ENCODE measurements at regions of chr12 and their contacts with region 1.

Region 1: DNA sequence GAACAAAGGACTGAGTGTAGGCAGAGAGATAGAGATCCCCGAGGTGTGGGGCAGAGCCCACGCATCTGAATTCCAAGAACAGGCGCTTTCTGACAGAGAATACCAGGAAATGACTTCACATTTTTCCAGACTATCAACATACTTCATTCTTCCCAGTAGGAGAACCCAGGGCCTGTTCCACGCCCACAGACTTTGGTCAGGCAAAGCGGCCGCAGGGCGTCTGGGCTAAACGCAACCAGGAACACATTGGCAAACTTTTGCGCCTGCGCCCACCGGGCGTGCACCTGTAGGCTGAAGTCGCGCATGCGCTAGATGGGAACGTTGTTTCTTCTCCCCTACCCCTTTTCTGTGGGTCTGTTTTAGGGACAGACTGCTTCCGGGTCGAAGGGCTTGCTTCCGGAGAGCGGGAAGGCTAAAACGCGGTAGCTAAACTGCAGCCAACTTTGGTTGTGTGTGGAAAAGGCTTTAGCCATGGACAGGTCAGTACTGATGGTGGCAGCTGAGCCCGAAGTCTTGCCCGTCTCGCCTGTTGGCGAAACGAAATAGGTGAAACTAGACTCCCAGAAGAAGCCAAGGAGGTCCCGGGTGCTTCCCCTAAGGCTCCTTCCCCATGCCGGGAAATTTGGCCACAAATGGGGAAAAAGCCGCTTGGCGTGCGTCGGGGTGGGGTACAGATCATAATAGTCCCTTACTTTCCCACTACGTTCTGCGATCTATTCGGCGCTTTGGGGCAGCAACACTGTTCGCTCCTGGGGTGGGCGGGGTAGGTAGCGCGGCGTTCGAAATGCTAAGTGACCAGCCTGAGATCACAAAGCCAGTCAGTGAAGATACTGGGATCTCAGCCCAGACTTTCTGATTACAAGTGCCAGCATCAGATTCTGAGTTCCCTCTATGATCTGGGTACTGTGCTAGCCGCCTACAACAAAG is at the start of gene NUP107:
- DNase-seq: peak; percentile 100
- ATAC-seq: peak; percentile 99
- total RNA-seq, gene NUP107: 15.7 TPM

Region 2: GRCh38 chr12:68223083-68223747 is 463.6 kb before region 1 on chr12:
- intact Hi-C with region 1: loop called (anchors 10 kb)
- DNase-seq: peak; percentile 78
- ATAC-seq: peak; percentile 99

Region 3: GRCh38 chr12:68358532-68359485 is 328.0 kb before region 1 on chr12:
- intact Hi-C with region 1: loop called (anchors 5 kb)
- DNase-seq: no peak
- ATAC-seq: peak; percentile 93

Region 4: GRCh38 chr12:69266036-69266635 is 579.3 kb after region 1 on chr12:
- intact Hi-C with region 1: no loop called
- DNase-seq: no peak
- ATAC-seq: no peak